IMR-90 (cell line): ENCODE measurements at regions of chr18 and their contacts with region 1.

Region 1: GRCh38 chr18:53586923-53587322 is 637.5 kb downstream of the MBD2 start:
- DNase-seq: no peak
- ATAC-seq: no peak
- H3K4me3 ChIP-seq: no peak overlapping the region
- H3K27ac ChIP-seq: no peak overlapping the region
- H3K4me1 ChIP-seq: no peaks in the 10 kb centered on the region
- H3K27me3 ChIP-seq: no peaks in the 10 kb centered on the region
- CTCF ChIP-seq: no peak
- POLR2A ChIP-seq: no peak
- RAD21 ChIP-seq: no peak

Region 2: DNA sequence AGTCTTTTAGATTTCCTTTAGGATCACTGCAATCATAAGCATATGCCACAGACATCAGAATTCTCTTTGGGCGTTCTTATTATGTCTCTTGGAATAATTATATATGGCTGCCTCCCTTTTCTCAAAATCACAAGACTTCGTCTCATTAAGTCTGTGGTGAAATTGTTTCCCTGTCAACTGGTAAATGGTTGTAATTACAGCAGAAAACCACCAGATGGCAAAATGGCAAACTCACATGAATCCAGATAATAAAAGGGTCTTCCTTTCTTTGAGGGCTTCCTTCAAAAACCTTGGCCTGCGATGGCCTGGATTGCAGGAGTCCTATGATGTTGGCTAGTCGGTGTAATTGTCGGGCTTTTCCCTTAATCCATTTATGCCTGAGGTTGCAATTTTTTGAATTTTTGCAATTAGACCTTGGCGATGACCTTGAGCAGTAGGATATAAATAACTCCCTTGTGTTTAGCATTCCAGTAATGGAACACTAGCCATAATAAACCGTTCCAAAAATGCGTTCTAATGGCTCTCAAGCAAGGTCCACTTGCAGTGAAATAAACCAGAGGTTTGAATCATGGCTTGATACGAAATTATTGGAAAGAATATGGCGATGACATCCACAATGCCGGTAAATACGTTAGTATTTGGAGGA is 18.9 kb before region 1 on chr18:
- CTCF ChIA-PET with region 1: no interaction called
- POLR2A ChIA-PET with region 1: no interaction called
- dilution Hi-C with region 1: no loop called
- in situ Hi-C with region 1: no loop called
- intact Hi-C with region 1: no loop called
- DNase-seq: peak; percentile 13
- ATAC-seq: peak; percentile 32; the same call in 1 of the 2 replicates
- H3K4me3 ChIP-seq: no peak overlapping the region
- H3K27ac ChIP-seq: no peak overlapping the region
- H3K4me1 ChIP-seq: no peaks in the 10 kb centered on the region
- H3K27me3 ChIP-seq: no peaks in the 10 kb centered on the region
- CTCF ChIP-seq: peak; percentile 49
- POLR2A ChIP-seq: no peak
- RAD21 ChIP-seq: peak; percentile 24; the same call in 1 of the 2 replicates

Region 3: DNA sequence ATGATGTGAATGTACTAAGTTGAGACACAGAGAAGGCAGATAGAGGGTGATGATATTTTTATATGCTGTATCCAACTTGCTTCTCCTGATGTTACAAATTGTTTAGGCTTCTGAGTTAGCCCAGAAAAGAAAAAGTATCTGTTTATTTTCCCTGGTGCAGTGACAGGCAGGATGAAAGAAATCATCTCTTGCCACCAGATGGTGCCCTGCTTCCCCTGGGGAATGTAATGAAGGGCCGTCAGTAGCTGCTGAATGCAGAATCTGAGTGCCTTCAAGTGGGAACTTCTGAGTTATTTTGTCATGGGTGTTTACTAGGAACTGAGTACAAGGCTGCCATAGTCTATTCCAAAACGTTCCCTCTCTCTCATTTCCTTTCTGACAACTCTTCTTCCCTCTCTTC is 112.0 kb after region 1 on chr18:
- CTCF ChIA-PET with region 1: no interaction called
- POLR2A ChIA-PET with region 1: no interaction called
- dilution Hi-C with region 1: no loop called
- in situ Hi-C with region 1: loop called (anchors 25 kb)
- intact Hi-C with region 1: no loop called
- DNase-seq: no peak
- ATAC-seq: no peak
- H3K4me3 ChIP-seq: no peak overlapping the region
- H3K27ac ChIP-seq: no peak overlapping the region
- H3K4me1 ChIP-seq: no peaks in the 10 kb centered on the region
- H3K27me3 ChIP-seq: no peaks in the 10 kb centered on the region
- CTCF ChIP-seq: no peak
- POLR2A ChIP-seq: no peak
- RAD21 ChIP-seq: no peak